ENCODE measurements at regions of chr10 and their contacts with region 1.

Region 1: DNA sequence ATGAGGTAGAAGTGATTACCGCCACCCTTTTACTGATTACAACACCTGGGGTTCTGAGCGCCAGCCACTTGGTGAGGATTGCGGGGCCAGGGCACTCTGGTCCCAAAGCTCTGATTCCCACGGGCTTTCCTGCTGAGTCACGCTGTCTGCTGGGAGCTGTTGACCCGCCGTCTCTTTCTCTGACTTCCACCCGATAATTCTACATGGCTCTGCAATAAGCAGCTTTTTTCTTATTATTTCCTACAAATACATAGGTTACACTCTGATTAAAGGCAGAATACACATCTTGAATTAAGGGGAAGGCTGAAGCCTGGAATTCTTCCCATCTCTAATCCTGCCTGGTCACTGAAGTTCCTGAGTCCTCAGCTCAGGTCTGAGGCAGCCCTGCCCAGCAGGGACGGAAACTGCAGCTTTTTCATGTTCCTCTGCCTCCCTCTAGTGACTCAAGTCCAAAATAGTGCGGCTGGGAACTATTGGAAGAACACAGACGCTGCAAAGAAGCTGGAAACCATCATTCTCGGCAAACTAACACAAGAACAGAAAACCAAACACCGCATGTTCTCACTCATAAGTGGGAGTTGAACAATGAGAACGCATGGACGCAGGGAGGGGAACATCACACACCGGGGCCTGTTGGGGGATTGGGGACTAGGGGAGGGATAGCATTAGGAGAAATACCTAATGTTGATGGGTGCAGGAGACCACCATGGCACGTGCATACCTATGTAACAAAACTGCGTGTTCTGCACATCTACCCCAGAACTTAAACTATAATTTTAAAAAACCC is 178.3 kb downstream of the PRKCQ start:
- DNase-seq: peak; percentile 65 to 83 (median 75)
- ATAC-seq: peak; percentile 96 to 97 (median 97)
- H3K4me3 ChIP-seq: peak overlapping the region in 2 of 4 donors; percentile 27 to 30
- H3K27ac ChIP-seq: peak overlapping the region in 2 of 4 donors; percentile 19 to 46
- H3K4me1 ChIP-seq: peaks cover 0 to 4% (median 0%) of the 10 kb centered on the region in 3 donors
- H3K27me3 ChIP-seq: no peaks in the 10 kb centered on the region
- CTCF ChIP-seq: peak; percentile 26 to 54 (median 46)

Region 2: GRCh38 chr10:6114805-6115341 is 286.9 kb before region 1 on chr10:
- intact Hi-C with region 1: loop called (anchors 5 to 10 kb)
- DNase-seq: peak in 1 of 6 donors; percentile 37
- ATAC-seq: peak in 3 of 4 donors; percentile 41 to 62 (median 55)
- H3K4me3 ChIP-seq: no peak overlapping the region
- H3K27ac ChIP-seq: no peak overlapping the region
- H3K4me1 ChIP-seq: no peaks in the 10 kb centered on the region
- H3K27me3 ChIP-seq: no peaks in the 10 kb centered on the region
- CTCF ChIP-seq: no peak

Region 3: GRCh38 chr10:6202684-6203330 is 198.9 kb before region 1 on chr10 and contains the start of gene PFKFB3:
- intact Hi-C with region 1: loop called in 1 of 3 experiments (anchors 5 kb)
- DNase-seq: peak; percentile 92 to 98 (median 96)
- ATAC-seq: peak; percentile 82 to 86 (median 84)
- H3K4me3 ChIP-seq: peak within 1 kb of the TSS; percentile 49 to 79 (median 66)
- H3K27ac ChIP-seq: peak within 1 kb of the TSS; percentile 78 to 87 (median 86)
- H3K4me1 ChIP-seq: peaks cover 12 to 25% (median 13%) of the 10 kb centered on the region in 3 donors
- H3K27me3 ChIP-seq: no peaks in the 10 kb centered on the region
- CTCF ChIP-seq: peak; percentile 98 to 99 (median 98)
- total RNA-seq, gene PFKFB3: 10.0 to 28.4 (median 18.2) TPM

Region 4: GRCh38 chr10:6211671-6212635 is 189.8 kb before region 1 on chr10:
- intact Hi-C with region 1: loop called in 1 of 3 experiments (anchors 10 kb)
- DNase-seq: peak in 1 of 6 donors; percentile 60
- ATAC-seq: peak in 1 of 4 donors; percentile 9
- H3K4me3 ChIP-seq: no peak overlapping the region
- H3K27ac ChIP-seq: no peak overlapping the region
- H3K4me1 ChIP-seq: no peaks in the 10 kb centered on the region
- H3K27me3 ChIP-seq: no peaks in the 10 kb centered on the region
- CTCF ChIP-seq: no peak

Region 5: DNA sequence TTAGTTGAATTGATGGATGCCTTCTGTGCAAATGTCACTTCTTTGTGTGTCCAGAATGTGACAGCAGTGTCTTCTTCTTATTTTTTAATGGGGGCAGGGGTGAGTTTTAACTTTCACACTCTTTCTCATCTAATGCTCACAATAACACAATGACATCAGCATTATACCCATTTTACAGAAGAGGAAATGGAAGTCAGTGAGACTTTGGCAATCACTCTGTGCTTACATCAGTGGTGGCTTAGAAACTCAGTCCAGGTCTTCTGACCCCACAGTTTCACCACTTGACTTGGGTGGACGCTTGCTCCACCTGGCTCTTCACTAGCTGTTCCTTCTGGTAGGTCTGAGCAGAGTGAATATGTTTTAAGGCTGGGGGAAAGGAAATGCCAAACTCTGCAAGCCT is 54.3 kb after region 1 on chr10:
- intact Hi-C with region 1: no loop called
- DNase-seq: no peak
- ATAC-seq: no peak
- H3K4me3 ChIP-seq: no peak overlapping the region
- H3K27ac ChIP-seq: no peak overlapping the region
- H3K4me1 ChIP-seq: no peaks in the 10 kb centered on the region
- H3K27me3 ChIP-seq: no peaks in the 10 kb centered on the region
- CTCF ChIP-seq: no peak